Naive thymus-derived CD4-positive, alpha-beta T cell (primary cell): ENCODE measurements at regions of chr3 and their contacts with region 1.

Region 1: DNA sequence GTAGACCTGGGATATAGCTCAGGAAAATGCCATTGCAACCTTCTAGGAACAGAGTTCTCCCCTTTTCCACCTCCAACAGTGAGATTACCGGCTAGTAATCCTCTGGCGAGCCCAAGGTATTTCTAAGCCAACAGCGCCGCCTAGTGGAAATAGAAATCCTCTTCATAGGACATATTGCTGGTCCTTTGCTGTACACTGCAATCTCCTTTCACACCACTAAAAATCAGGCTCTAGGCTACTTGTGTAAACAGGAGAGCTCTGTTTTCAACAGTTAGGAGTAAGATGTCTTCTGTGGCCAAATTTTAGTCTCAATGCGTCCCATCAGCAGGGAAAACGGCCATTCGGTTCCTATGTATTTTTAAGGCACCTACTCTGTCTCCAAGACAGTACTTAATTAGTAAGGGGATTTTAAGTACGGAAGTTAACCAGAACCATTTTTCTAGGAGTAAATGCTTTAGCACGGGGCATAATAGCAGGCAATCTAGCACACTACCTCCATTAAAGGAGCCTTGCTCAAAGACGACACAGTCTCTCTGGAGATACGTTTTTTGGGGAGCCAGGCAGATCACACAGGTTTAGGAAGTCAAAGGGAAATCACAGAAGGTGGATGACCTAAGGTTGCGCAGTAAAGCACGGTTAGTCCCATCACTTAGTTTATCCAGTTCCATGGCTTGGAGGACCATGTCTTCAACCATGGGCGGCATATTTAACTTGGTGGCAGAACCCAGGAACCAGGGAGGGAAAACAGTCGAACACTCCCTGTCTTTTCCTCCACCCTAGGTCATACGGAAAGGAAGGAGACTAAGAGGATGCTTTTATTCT is 43.8 kb downstream of the NCEH1 start:
- DNase-seq: peak; percentile 38 to 78 (median 67)
- ATAC-seq: peak; percentile 96
- H3K4me3 ChIP-seq: no peak overlapping the region
- H3K4me3 Mint-ChIP-seq: peak overlapping the region in 5 of 10 donors; percentile 0 to 47 (median 21)
- H3K27ac ChIP-seq: no peak overlapping the region
- H3K27ac Mint-ChIP-seq: peak overlapping the region in 2 of 9 donors; percentile 35 to 43
- H3K4me1 ChIP-seq: peaks cover 4 to 11% of the 10 kb centered on the region in 2 donors
- H3K4me1 Mint-ChIP-seq: peaks cover 11 to 18% (median 15%) of the 10 kb centered on the region in 7 donors
- H3K27me3 ChIP-seq: no peaks in the 10 kb centered on the region
- H3K27me3 Mint-ChIP-seq: peaks cover 0 to 12% (median 0%) of the 10 kb centered on the region in 5 donors

Region 2: GRCh38 chr3:170961616-170962400 is 1705.3 kb before region 1 on chr3:
- CTCF ChIA-PET with region 1: no interaction called
- POLR2A ChIA-PET with region 1: no interaction called
- intact Hi-C with region 1: loop called in 1 of 2 experiments (anchors 5 kb)
- DNase-seq: peak in 5 of 9 donors; percentile 4 to 20 (median 14)
- ATAC-seq: no peak
- H3K4me3 ChIP-seq: no peak overlapping the region
- H3K4me3 Mint-ChIP-seq: no peak overlapping the region
- H3K27ac ChIP-seq: no peak overlapping the region
- H3K27ac Mint-ChIP-seq: peak overlapping the region in 1 of 9 donors; percentile 23
- H3K4me1 ChIP-seq: no peaks in the 10 kb centered on the region
- H3K4me1 Mint-ChIP-seq: no peaks in the 10 kb centered on the region
- H3K27me3 ChIP-seq: no peaks in the 10 kb centered on the region
- H3K27me3 Mint-ChIP-seq: peaks cover 0 to 23% (median 19%) of the 10 kb centered on the region in 5 donors

Region 3: DNA sequence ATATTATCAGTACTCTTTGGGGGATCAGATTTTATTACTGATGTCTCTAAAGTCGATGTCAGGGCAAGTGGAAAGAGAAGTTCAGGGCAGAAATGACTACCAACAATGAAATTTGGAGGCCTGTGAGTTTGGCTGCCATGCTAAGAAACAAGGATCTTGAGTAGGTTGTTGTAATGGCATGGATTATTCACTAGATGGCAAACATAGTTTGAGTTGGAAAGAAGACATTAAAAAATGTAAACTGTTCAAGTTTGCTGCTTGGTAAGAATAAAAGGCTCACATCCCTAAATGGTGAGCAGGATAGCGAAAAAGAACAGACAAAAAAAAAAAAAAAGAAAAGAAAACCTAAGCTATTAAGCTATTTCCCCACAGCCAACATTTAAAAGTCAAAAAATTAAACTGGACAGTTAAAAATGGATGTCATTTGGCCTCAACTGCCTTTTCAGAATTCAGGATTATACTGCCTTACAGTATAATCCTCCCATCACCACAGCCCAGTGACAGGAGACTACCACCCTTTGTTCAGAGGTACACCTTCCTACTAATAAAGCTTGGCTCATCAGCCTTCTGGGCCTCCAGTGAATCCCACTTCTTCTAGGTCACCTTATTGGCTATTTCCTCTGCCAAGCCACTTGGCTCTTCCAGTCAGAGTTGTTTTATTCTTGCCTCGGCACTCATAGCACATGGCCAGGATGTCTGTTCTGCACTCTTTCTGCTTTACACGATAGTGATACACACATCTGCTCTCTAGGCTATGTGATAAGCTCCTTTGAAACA is 1020.5 kb before region 1 on chr3:
- CTCF ChIA-PET with region 1: no interaction called
- POLR2A ChIA-PET with region 1: no interaction called
- intact Hi-C with region 1: loop called (anchors 1 to 10 kb)
- DNase-seq: peak in 5 of 9 donors; percentile 2 to 19 (median 11)
- ATAC-seq: peak; percentile 40
- H3K4me3 ChIP-seq: no peak overlapping the region
- H3K4me3 Mint-ChIP-seq: no peak overlapping the region
- H3K27ac ChIP-seq: no peak overlapping the region
- H3K27ac Mint-ChIP-seq: no peak overlapping the region
- H3K4me1 ChIP-seq: no peaks in the 10 kb centered on the region
- H3K4me1 Mint-ChIP-seq: no peaks in the 10 kb centered on the region
- H3K27me3 ChIP-seq: no peaks in the 10 kb centered on the region
- H3K27me3 Mint-ChIP-seq: peaks cover 0 to 2% (median 0%) of the 10 kb centered on the region in 5 donors

Region 4: DNA sequence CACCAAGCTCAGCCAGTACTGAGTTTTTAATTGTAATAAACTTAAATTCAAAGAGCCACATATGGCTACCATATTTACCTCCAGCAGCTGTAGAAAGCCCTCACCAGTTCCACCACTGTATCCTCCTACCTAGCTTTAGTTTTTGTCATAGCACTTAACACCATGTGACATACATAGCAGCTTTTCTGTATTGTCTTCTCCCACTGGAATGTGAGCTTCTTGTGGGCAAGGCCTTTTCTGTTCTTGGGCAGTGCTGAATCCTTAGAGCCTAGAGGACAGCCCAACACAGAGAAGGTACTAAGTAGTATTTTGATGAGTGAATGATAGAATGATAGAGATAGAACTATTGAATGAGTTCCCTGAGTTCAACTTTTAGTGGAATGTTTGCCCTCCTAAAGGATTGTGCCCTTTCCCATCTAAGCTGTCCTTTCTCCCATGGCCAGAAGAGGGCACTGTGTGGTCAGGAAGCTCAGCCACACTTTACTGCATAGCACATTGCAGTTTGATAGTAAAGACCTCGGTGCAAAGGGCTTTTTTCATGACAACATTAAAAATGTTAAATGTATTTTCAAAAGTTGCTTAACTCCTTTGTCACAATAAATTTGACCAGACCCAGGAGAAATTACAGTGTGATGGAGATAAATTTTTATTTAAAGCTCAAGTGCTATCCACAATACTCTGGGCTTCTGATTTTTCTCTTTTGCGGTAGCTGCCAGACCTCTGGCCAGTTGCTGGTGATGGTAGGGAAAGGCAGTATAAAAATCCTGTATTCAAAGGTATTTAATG is 334.6 kb before region 1 on chr3:
- CTCF ChIA-PET with region 1: interaction called, 5 read pairs
- POLR2A ChIA-PET with region 1: no interaction called
- intact Hi-C with region 1: loop called (anchors 1 kb)
- DNase-seq: peak; percentile 3 to 55 (median 41)
- ATAC-seq: peak; percentile 92
- H3K4me3 ChIP-seq: no peak overlapping the region
- H3K4me3 Mint-ChIP-seq: no peak overlapping the region
- H3K27ac ChIP-seq: no peak overlapping the region
- H3K27ac Mint-ChIP-seq: peak overlapping the region in 2 of 9 donors; percentile 12 to 36
- H3K4me1 ChIP-seq: no peaks in the 10 kb centered on the region
- H3K4me1 Mint-ChIP-seq: peaks cover 0 to 10% (median 4%) of the 10 kb centered on the region in 7 donors
- H3K27me3 ChIP-seq: no peaks in the 10 kb centered on the region
- H3K27me3 Mint-ChIP-seq: no peaks in the 10 kb centered on the region

Region 5: GRCh38 chr3:172461530-172462138 is 205.4 kb before region 1 on chr3:
- CTCF ChIA-PET with region 1: interaction called, 4 read pairs
- POLR2A ChIA-PET with region 1: no interaction called
- intact Hi-C with region 1: loop called in 1 of 2 experiments (anchors 2 kb)
- DNase-seq: peak in 4 of 9 donors; percentile 23 to 37 (median 30)
- ATAC-seq: peak; percentile 77
- H3K4me3 ChIP-seq: no peak overlapping the region
- H3K4me3 Mint-ChIP-seq: no peak overlapping the region
- H3K27ac ChIP-seq: no peak overlapping the region
- H3K27ac Mint-ChIP-seq: no peak overlapping the region
- H3K4me1 ChIP-seq: no peaks in the 10 kb centered on the region
- H3K4me1 Mint-ChIP-seq: no peaks in the 10 kb centered on the region
- H3K27me3 ChIP-seq: no peaks in the 10 kb centered on the region
- H3K27me3 Mint-ChIP-seq: peaks cover 0 to 7% (median under 1%) of the 10 kb centered on the region in 5 donors

Region 6: GRCh38 chr3:172476347-172476746 is 190.7 kb before region 1 on chr3:
- CTCF ChIA-PET with region 1: no interaction called
- POLR2A ChIA-PET with region 1: no interaction called
- intact Hi-C with region 1: loop called in 1 of 2 experiments (anchors 1 kb)
- DNase-seq: no peak
- ATAC-seq: no peak
- H3K4me3 ChIP-seq: peak overlapping the region; percentile 61
- H3K4me3 Mint-ChIP-seq: peak overlapping the region; percentile 27 to 95 (median 90)
- H3K27ac ChIP-seq: no peak overlapping the region
- H3K27ac Mint-ChIP-seq: no peak overlapping the region
- H3K4me1 ChIP-seq: no peaks in the 10 kb centered on the region
- H3K4me1 Mint-ChIP-seq: peaks cover 5 to 18% (median 12%) of the 10 kb centered on the region in 7 donors
- H3K27me3 ChIP-seq: no peaks in the 10 kb centered on the region
- H3K27me3 Mint-ChIP-seq: peaks cover 0 to 10% (median 4%) of the 10 kb centered on the region in 5 donors

Region 7: DNA sequence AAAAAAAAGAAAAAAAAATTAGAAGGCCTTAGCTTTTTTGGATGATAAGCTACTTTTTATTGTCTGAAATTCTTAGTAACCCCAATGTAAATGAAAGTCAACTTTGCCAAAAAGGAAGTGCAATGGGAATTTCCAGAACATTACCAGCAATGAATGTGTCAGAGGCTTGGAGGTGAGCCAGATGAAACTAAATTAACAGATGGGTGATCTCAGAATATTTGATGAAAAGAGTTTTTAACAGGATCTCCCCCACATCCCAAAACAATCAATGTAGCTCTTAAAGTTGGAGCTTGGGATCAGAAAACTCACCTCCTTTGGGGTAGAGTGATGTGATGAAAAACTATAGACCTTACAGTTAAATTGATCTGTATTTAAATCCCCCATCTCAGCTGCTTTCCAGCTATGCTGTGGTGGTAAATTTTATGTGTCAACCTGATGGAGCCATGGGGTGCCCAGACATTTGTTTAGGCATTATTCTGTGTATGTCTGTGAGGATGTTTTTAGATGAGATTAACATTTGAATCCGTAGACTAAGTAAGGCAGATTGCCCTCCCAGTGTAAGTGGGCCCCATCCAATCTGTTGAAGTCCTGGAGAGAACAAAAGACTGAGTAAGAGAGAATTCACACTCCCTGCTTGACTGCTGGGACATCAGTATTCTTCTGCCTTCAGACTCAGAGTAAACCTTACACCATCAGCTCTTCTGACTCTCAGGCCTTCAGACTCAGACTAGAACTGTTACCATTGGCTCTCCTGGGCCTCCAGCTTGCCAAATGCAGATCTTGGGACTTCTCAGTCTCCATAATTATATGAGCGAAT is 59.6 kb before region 1 on chr3:
- CTCF ChIA-PET with region 1: no interaction called
- POLR2A ChIA-PET with region 1: no interaction called
- intact Hi-C with region 1: no loop called
- DNase-seq: no peak
- ATAC-seq: no peak
- H3K4me3 ChIP-seq: no peak overlapping the region
- H3K4me3 Mint-ChIP-seq: no peak overlapping the region
- H3K27ac ChIP-seq: no peak overlapping the region
- H3K27ac Mint-ChIP-seq: peak overlapping the region in 1 of 9 donors; percentile 43
- H3K4me1 ChIP-seq: no peaks in the 10 kb centered on the region
- H3K4me1 Mint-ChIP-seq: peaks cover 0 to 13% (median 0%) of the 10 kb centered on the region in 7 donors
- H3K27me3 ChIP-seq: no peaks in the 10 kb centered on the region
- H3K27me3 Mint-ChIP-seq: peaks cover 0 to 5% (median 0%) of the 10 kb centered on the region in 5 donors

Region 8: GRCh38 chr3:172622916-172623700 is 44.0 kb before region 1 on chr3:
- CTCF ChIA-PET with region 1: interaction called, 3 read pairs
- POLR2A ChIA-PET with region 1: no interaction called
- intact Hi-C with region 1: loop called in 1 of 2 experiments (anchors 2 kb)
- DNase-seq: peak in 7 of 9 donors; percentile 16 to 48 (median 34)
- ATAC-seq: peak; percentile 75
- H3K4me3 ChIP-seq: no peak overlapping the region
- H3K4me3 Mint-ChIP-seq: peak overlapping the region in 8 of 10 donors; percentile 37 to 71 (median 50)
- H3K27ac ChIP-seq: no peak overlapping the region
- H3K27ac Mint-ChIP-seq: no peak overlapping the region
- H3K4me1 ChIP-seq: no peaks in the 10 kb centered on the region
- H3K4me1 Mint-ChIP-seq: peaks cover 0 to 12% (median 6%) of the 10 kb centered on the region in 7 donors
- H3K27me3 ChIP-seq: no peaks in the 10 kb centered on the region
- H3K27me3 Mint-ChIP-seq: no peaks in the 10 kb centered on the region

Region 9: DNA sequence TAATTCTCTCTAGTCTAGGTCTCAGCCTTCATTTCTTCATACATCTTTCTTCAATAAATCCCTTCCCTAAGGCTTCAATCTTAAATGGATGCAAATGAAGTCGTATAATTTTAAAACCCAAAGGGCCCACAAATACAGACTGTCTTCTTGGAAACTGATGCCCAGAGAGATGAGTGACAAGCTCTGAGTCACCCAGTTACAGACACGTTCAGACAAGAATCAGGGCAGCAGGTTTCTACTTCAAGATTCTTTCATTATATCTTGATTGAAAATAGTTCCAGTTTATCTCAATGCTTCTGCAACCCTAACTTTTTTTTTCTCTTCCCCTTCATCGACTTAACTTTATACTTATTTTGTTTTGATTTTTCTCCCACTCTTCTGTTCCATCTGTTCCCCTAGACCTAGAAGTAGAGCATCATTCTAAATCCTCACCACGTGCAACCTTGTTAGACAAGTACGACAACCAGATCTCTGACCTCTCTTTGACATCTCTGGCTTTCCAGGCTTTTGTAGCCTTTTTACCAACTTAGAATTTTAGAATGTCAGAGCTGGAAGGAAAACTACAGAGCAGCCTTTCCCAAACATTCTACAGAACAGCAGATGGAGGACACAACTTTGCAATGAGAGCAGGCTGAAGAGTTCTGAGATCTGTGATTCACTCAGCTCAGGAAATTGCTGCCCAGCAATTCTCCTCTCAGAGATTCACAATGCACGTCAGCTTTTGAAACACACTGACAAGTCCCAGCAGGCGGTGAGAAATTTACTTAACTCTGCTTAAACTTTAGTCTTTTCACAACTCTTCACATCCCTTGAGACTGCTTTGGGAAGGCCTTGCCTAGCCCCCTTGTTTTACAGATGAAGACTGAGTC is 18.5 kb after region 1 on chr3:
- CTCF ChIA-PET with region 1: no interaction called
- POLR2A ChIA-PET with region 1: no interaction called
- intact Hi-C with region 1: no loop called
- DNase-seq: no peak
- ATAC-seq: no peak
- H3K4me3 ChIP-seq: no peak overlapping the region
- H3K4me3 Mint-ChIP-seq: peak overlapping the region in 1 of 10 donors; percentile 14
- H3K27ac ChIP-seq: no peak overlapping the region
- H3K27ac Mint-ChIP-seq: peak overlapping the region in 2 of 9 donors; percentile 3 to 69
- H3K4me1 ChIP-seq: no peaks in the 10 kb centered on the region
- H3K4me1 Mint-ChIP-seq: peaks cover 0 to 20% (median 0%) of the 10 kb centered on the region in 7 donors
- H3K27me3 ChIP-seq: no peaks in the 10 kb centered on the region
- H3K27me3 Mint-ChIP-seq: no peaks in the 10 kb centered on the region

Region 10: DNA sequence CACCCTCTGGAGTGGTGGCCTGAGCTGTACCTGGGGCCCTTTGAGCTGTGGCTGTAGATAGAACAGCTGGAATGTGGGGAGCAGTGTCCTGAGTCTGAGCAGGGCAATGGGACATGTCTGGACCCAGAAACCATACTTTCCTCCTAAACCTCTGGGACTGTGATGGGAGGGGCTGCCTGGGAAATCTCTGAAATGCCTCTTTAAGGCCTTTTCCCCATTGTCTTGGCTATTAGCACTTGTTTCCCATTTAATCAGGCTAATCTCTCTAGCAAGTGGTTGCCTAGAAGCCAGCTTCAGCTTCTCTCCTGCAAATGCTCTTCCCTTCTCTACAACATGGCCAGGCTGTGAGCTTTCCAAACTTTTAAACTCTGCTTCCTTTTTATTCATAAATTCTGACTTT is 532.5 kb after region 1 on chr3:
- CTCF ChIA-PET with region 1: no interaction called
- POLR2A ChIA-PET with region 1: no interaction called
- intact Hi-C with region 1: no loop called
- DNase-seq: no peak
- ATAC-seq: no peak
- H3K4me3 ChIP-seq: no peak overlapping the region
- H3K4me3 Mint-ChIP-seq: no peak overlapping the region
- H3K27ac ChIP-seq: no peak overlapping the region
- H3K27ac Mint-ChIP-seq: no peak overlapping the region
- H3K4me1 ChIP-seq: no peaks in the 10 kb centered on the region
- H3K4me1 Mint-ChIP-seq: no peaks in the 10 kb centered on the region
- H3K27me3 ChIP-seq: no peaks in the 10 kb centered on the region
- H3K27me3 Mint-ChIP-seq: no peaks in the 10 kb centered on the region

Region 11: DNA sequence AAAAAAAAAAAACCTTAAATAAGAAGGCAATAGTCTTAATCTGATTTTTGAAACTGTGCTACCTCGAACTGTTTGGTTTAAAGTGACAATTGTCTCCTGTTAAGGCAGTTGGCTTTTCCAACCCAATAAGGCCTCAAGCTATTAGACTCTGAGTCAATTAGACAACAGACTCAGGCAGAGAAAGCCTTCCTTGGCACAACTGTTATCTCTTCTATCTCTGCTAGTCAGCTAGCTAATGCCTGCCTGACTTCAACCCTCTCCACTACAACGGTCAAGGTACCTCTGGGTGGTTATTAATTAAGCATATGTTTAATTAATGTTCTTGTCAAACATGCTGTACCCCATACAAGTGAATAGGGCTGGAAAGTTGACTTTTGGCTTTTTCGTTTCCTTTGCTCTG is 620.3 kb after region 1 on chr3:
- CTCF ChIA-PET with region 1: no interaction called
- POLR2A ChIA-PET with region 1: no interaction called
- intact Hi-C with region 1: no loop called
- DNase-seq: no peak
- ATAC-seq: no peak
- H3K4me3 ChIP-seq: no peak overlapping the region
- H3K4me3 Mint-ChIP-seq: no peak overlapping the region
- H3K27ac ChIP-seq: no peak overlapping the region
- H3K27ac Mint-ChIP-seq: no peak overlapping the region
- H3K4me1 ChIP-seq: no peaks in the 10 kb centered on the region
- H3K4me1 Mint-ChIP-seq: no peaks in the 10 kb centered on the region
- H3K27me3 ChIP-seq: no peaks in the 10 kb centered on the region
- H3K27me3 Mint-ChIP-seq: no peaks in the 10 kb centered on the region